Activated CD8-positive, alpha-beta T cell treated with anti-CD3 and anti-CD28 coated beads for 36 hours (primary cell): ENCODE measurements at regions of chr9 and their contacts with region 1.

Region 1: GRCh38 chr9:69131682-69132081 is 42.4 kb upstream of the TJP2 start:
- DNase-seq: no peak
- ATAC-seq: no peak
- H3K4me3 Mint-ChIP-seq: no peak overlapping the region
- H3K27ac Mint-ChIP-seq: no peak overlapping the region
- H3K4me1 Mint-ChIP-seq: no peaks in the 10 kb centered on the region
- H3K27me3 Mint-ChIP-seq: no peaks in the 10 kb centered on the region
- CTCF ChIP-seq: no peak

Region 2: DNA sequence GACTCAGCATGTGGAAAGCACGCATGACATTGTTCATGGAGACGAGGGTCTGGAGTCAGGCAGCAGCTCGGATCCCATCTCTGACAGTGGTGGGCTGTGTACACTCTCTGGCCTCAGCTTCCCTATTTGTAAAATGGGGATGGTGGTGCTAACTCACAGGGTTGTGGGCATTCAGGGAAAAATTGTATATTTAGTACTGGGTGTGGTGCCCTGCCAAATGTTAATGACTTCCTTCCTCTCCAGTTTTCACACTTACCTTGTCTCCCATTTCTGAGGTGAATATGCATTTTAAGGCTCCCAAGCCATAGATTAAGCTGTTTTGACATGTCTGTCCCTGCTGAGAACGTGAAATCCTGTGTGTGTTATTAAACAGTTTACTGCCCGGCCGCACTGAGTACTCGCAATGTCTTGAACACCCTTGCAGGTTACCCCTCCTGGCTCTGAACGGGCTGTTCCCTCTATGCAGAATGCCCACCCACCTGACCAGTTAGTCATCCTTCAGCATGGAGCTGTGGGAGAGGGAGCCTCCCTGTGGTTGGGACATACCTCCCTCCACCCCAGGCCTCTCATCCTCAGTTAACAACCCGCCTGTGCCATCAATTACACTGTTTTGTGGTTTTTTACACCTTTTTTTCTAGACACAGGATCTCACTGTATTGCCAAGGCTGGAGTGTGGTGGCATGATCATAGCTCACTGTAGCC is 68.2 kb after region 1 on chr9:
- CTCF ChIA-PET with region 1: no interaction called
- POLR2A ChIA-PET with region 1: no interaction called
- intact Hi-C with region 1: loop called (anchors 10 kb)
- DNase-seq: no peak
- ATAC-seq: no peak
- H3K4me3 Mint-ChIP-seq: no peak overlapping the region
- H3K27ac Mint-ChIP-seq: no peak overlapping the region
- H3K4me1 Mint-ChIP-seq: peaks cover 5% of the 10 kb centered on the region
- H3K27me3 Mint-ChIP-seq: no peaks in the 10 kb centered on the region
- CTCF ChIP-seq: no peak